Mammary epithelial cell (primary cell): ENCODE measurements at regions of chr19 and their contacts with region 1.

Region 1: DNA sequence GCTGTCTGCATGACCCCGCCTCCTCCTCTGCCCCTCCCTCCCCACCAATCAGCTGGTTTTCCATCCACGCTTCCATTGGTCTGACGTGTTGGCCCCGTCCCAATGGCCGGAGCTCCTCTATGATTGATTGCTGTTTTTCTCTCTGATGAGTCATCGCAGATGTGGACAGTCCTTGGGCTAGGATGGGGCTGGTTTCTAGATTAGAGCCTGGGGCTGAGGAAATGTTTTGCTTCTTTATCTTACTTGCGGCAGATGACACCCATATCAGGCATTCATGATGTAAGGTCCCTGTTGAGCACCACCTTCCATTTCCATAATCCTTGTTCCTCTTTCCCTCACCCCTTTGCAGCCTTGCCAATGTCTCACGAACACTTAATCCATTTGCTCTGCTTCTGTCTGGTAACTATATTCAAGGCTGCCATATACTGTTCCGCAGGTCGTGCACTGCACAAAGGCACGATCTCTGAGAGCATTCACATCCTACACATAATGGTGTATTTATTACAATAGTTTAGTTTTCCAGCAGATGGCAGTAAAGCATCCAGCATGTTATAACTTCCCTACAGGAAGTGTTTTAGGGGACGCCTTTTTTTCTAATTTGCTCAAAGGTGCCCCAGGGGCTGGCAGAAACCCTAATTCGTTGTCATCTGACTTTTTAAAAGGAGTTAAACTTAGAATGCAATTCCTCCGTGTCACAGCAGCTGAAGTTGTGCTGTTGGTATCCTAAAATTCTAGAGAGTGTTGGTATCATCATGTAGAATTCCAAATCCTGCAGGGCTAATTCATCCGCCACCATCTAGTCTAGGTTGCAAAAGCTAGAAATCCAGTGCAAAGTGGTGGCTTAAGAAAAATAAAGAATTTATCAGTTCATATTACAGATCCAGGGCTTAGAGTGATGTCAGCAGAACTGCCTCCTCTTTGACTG is 73.5 kb downstream of the MAP4K1 start:
- DNase-seq: peak; percentile 93
- H3K4me3 ChIP-seq: peak overlapping the region in 2 of 3 experiments; percentile 10 to 27
- H3K27ac ChIP-seq: peak overlapping the region; percentile 45
- H3K4me1 ChIP-seq: peaks cover 16% of the 10 kb centered on the region
- H3K27me3 ChIP-seq: no peaks in the 10 kb centered on the region
- CTCF ChIP-seq: peak; percentile 69 to 73

Region 2: DNA sequence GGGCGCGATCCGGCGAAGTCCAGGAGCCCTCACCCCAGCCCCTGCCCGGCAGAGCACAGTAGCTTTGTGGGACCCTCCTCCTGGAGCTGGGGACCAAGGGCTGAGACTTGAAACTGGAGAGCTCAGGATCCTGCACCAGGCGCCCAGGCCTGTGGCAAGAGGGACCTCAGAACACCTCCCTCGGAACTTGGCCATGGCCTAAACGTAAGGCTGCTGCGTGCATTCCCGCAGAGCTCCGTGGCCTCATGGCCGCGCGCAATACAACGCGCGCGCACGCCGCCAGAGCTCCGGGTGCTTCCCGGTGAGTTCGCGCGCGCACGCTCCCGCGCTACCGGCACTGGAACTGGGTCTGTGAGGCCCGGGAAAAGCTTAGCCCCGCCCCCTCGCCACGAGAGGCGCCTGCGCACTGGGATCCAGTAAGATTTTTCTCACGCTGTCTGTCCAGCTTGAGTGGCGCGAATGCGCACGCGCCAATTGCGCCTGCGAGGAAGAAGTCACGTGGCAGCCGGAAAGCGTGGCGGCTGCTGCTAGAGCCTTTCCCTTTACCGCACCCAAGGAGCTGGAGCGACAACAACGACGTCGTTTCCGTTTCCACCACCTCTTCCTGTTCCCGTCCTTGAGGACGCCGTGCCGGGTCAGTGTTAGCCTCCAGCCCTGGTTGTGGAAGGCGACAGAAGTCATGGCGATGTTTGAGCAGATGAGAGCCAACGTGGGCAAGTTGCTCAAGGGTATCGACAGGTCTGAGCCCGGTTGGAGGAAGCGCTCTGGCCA is 74.5 kb after region 1 on chr19 and contains the start of gene EIF3K:
- CTCF ChIA-PET with region 1: no interaction called
- dilution Hi-C with region 1: loop called (anchors 10 kb)
- in situ Hi-C with region 1: loop called in 1 of 2 experiments (anchors 5 kb)
- intact Hi-C with region 1: loop called (anchors 1 kb)
- DNase-seq: peak; percentile 98
- H3K4me3 ChIP-seq: peak within 1 kb of the TSS; percentile 80 to 90 (median 88)
- H3K27ac ChIP-seq: peak within 1 kb of the TSS; percentile 80
- H3K4me1 ChIP-seq: peaks cover 18% of the 10 kb centered on the region
- H3K27me3 ChIP-seq: no peaks in the 10 kb centered on the region
- CTCF ChIP-seq: no peak
- total RNA-seq, gene EIF3K: 237 to 319 TPM

Region 3: DNA sequence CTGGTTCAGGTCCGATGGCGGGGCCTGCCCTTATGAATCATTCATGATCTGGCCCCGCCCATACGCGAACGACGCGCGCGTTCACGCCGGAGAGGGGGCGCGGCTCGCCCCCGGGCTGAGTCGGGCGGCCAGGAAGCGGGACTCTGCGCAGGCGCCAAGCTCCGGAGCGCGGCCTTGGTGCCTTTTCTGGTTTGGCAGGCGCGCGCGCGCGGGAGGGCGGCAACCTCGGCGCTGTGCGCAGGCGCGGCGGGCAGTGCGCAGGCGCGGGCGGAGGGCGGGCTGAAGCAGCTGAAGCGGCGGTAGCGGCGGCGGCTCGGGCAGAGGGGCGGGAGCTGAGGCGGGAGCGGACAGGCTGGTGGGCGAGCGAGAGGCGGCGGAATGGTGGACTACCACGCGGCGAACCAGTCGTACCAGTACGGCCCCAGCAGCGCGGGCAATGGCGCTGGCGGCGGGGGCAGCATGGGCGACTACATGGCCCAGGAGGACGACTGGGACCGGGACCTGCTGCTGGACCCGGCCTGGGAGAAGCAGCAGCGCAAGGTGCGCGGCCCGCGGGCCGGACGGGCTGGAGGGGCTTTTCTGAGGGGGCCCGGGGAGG is 103.2 kb after region 1 on chr19 and contains the start of gene ACTN4:
- CTCF ChIA-PET with region 1: no interaction called
- dilution Hi-C with region 1: loop called (anchors 5 kb)
- in situ Hi-C with region 1: no loop called
- intact Hi-C with region 1: no loop called
- DNase-seq: peak; percentile 96
- H3K4me3 ChIP-seq: peak within 1 kb of the TSS; percentile 89 to 99 (median 95)
- H3K27ac ChIP-seq: peak within 1 kb of the TSS; percentile 100
- H3K4me1 ChIP-seq: peaks cover 20% of the 10 kb centered on the region
- H3K27me3 ChIP-seq: no peaks in the 10 kb centered on the region
- CTCF ChIP-seq: no peak
- total RNA-seq, gene ACTN4: 951 to 1,146 TPM

Region 4: GRCh38 chr19:38718747-38719543 is 174.6 kb after region 1 on chr19:
- CTCF ChIA-PET with region 1: no interaction called
- dilution Hi-C with region 1: no loop called
- in situ Hi-C with region 1: loop called in 1 of 2 experiments (anchors 10 kb)
- intact Hi-C with region 1: loop called (anchors 2 kb)
- DNase-seq: peak; percentile 68
- H3K4me3 ChIP-seq: no peak overlapping the region
- H3K27ac ChIP-seq: peak overlapping the region; percentile 86
- H3K4me1 ChIP-seq: peaks cover 43% of the 10 kb centered on the region
- H3K27me3 ChIP-seq: no peaks in the 10 kb centered on the region
- CTCF ChIP-seq: peak; percentile 27 to 61

Region 5: GRCh38 chr19:38838573-38839269 is 294.4 kb after region 1 on chr19:
- CTCF ChIA-PET with region 1: no interaction called
- dilution Hi-C with region 1: no loop called
- in situ Hi-C with region 1: no loop called
- intact Hi-C with region 1: loop called (anchors 1 kb)
- DNase-seq: peak; percentile 98
- H3K4me3 ChIP-seq: no peak overlapping the region
- H3K27ac ChIP-seq: peak overlapping the region; percentile 75
- H3K4me1 ChIP-seq: peaks cover 55% of the 10 kb centered on the region
- H3K27me3 ChIP-seq: no peaks in the 10 kb centered on the region
- CTCF ChIP-seq: peak; percentile 53 to 72